Calu3 (cell line): ENCODE measurements at regions of chr16 and their contacts with region 1.

Region 1: GRCh38 chr16:35881654-35882053 is 2422.2 kb downstream of the TP53TG3F start:
- DNase-seq: no peak
- H3K4me3 Mint-ChIP-seq: no peak overlapping the region
- H3K27ac Mint-ChIP-seq: no peak overlapping the region
- H3K4me1 Mint-ChIP-seq: no peaks in the 10 kb centered on the region
- H3K27me3 Mint-ChIP-seq: no peaks in the 10 kb centered on the region
- CTCF ChIP-seq: no peak

Region 2: GRCh38 chr16:35841632-35842031 is 40.0 kb before region 1 on chr16:
- CTCF ChIA-PET with region 1: no interaction called
- intact Hi-C with region 1: loop called (anchors 5 kb)
- DNase-seq: no peak
- H3K4me3 Mint-ChIP-seq: no peak overlapping the region
- H3K27ac Mint-ChIP-seq: no peak overlapping the region
- H3K4me1 Mint-ChIP-seq: no peaks in the 10 kb centered on the region
- H3K27me3 Mint-ChIP-seq: no peaks in the 10 kb centered on the region
- CTCF ChIP-seq: no peak